ENCODE measurements at regions of chr10 and their contacts with region 1.

Region 1: DNA sequence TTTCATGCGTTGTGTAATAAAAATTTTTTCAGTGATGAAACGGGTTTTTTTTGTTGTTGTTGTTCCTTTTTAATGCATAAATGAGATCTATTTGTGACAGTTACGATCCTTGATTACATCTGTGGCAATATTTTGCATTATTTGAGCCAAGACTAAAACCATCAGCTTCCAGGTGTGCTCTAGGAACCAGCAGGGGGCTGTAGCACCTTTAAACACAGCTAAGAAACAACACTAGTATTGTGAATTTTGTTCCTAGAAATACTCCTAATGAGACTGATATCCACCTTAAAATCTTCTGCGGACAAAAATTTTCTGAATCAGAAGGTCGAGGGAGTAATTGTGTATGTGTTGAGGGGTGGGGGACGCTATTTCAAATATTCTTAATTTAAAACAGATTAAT is 52.6 kb downstream of the FGFBP3 start:
- DNase-seq: peak in 3 of 9 experiments; percentile 19 to 34 (median 34)
- ATAC-seq: no peak
- H3K4me3 ChIP-seq: no peak overlapping the region
- H3K4me3 Mint-ChIP-seq: no peak overlapping the region
- H3K27ac ChIP-seq: no peak overlapping the region
- H3K27ac Mint-ChIP-seq: no peak overlapping the region
- H3K4me1 ChIP-seq: no peaks in the 10 kb centered on the region
- H3K4me1 Mint-ChIP-seq: no peaks in the 10 kb centered on the region
- H3K27me3 ChIP-seq: no peaks in the 10 kb centered on the region
- H3K27me3 Mint-ChIP-seq: no peaks in the 10 kb centered on the region
- CTCF ChIP-seq: no peak

Region 2: GRCh38 chr10:91820144-91820543 is 36.5 kb before region 1 on chr10:
- CTCF ChIA-PET with region 1: no interaction called
- POLR2A ChIA-PET with region 1: no interaction called
- intact Hi-C with region 1: loop called in 1 of 2 experiments (anchors 5 kb)
- DNase-seq: no peak
- ATAC-seq: no peak
- H3K4me3 ChIP-seq: no peak overlapping the region
- H3K4me3 Mint-ChIP-seq: no peak overlapping the region
- H3K27ac ChIP-seq: no peak overlapping the region
- H3K27ac Mint-ChIP-seq: no peak overlapping the region
- H3K4me1 ChIP-seq: no peaks in the 10 kb centered on the region
- H3K4me1 Mint-ChIP-seq: peaks cover 7% of the 10 kb centered on the region
- H3K27me3 ChIP-seq: no peaks in the 10 kb centered on the region
- H3K27me3 Mint-ChIP-seq: no peaks in the 10 kb centered on the region
- CTCF ChIP-seq: no peak

Region 3: GRCh38 chr10:92432596-92432995 is 576.0 kb after region 1 on chr10:
- CTCF ChIA-PET with region 1: no interaction called
- POLR2A ChIA-PET with region 1: no interaction called
- intact Hi-C with region 1: loop called in 1 of 2 experiments (anchors 5 kb)
- DNase-seq: no peak
- ATAC-seq: no peak
- H3K4me3 ChIP-seq: no peak overlapping the region
- H3K4me3 Mint-ChIP-seq: no peak overlapping the region
- H3K27ac ChIP-seq: no peak overlapping the region
- H3K27ac Mint-ChIP-seq: no peak overlapping the region
- H3K4me1 ChIP-seq: no peaks in the 10 kb centered on the region
- H3K4me1 Mint-ChIP-seq: no peaks in the 10 kb centered on the region
- H3K27me3 ChIP-seq: no peaks in the 10 kb centered on the region
- H3K27me3 Mint-ChIP-seq: no peaks in the 10 kb centered on the region
- CTCF ChIP-seq: no peak